ENCODE measurements at regions of chr7 and their contacts with region 1.

Region 1: GRCh38 chr7:37352974-37353948 is 95.4 kb downstream of the ELMO1 start:
- DNase-seq: peak; percentile 83
- H3K4me3 Mint-ChIP-seq: peak overlapping the region; percentile 92
- H3K27ac Mint-ChIP-seq: peak overlapping the region; percentile 99
- H3K4me1 Mint-ChIP-seq: peaks cover 86% of the 10 kb centered on the region
- H3K27me3 Mint-ChIP-seq: no peaks in the 10 kb centered on the region

Region 2: DNA sequence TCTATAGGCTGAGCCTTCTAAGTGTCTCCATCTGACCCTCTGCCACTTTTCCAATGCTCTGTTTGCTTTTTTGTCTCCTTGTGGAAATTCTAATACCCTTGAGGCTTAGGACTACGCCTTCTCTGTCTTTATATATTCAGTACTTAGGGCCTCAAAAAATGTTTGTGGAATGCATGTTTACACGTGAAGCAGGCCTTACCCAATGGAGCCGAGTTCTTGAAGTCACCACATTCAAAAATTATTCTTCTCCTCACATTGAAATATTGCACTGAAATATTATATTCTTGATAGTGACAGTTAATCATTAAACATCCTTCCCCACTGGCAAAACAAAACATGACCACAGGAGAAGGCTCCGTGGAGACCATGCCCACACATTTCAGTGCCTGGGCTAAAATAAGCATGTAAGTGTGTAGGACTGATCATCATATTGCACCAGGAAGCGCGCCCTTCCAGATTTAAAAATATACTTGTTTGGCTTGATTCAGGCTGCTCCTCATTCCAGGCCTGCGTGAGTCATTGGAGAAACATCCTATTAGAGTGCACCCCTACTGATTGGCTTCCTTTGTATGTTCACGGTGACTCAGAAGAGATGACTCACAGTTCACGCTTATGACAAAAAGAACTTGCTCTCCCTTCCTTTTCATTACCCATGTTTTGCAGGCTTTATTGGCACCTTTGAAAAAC is 321.5 kb before region 1 on chr7:
- CTCF ChIA-PET with region 1: interaction called, 3 read pairs
- POLR2A ChIA-PET with region 1: no interaction called
- intact Hi-C with region 1: loop called (anchors 5 kb)
- DNase-seq: peak; percentile 68
- H3K4me3 Mint-ChIP-seq: no peak overlapping the region
- H3K27ac Mint-ChIP-seq: peak overlapping the region; percentile 49
- H3K4me1 Mint-ChIP-seq: peaks cover 57% of the 10 kb centered on the region
- H3K27me3 Mint-ChIP-seq: no peaks in the 10 kb centered on the region

Region 3: DNA sequence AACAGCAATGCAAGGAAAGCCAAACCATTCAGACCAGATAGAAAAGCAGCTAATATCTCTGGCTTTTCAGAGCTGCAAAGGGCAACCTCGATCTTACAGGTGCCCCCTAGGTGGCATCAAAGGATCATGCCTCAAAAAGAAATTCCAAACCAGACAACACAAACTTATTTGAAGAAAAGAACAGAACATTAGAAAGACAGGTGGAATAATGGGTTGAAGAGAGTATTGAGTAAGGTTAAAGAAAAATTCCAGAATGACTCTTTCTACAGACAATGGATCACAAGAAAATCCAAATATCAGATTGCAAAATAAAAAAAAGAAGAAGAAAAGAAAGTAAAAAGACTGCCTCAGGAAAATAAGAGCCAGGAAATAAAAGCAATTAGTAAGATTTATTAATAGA is 118.3 kb before region 1 on chr7:
- CTCF ChIA-PET with region 1: interaction called, 39 read pairs
- POLR2A ChIA-PET with region 1: interaction called, 3 read pairs
- intact Hi-C with region 1: loop called (anchors 1 kb)
- DNase-seq: no peak
- H3K4me3 Mint-ChIP-seq: no peak overlapping the region
- H3K27ac Mint-ChIP-seq: no peak overlapping the region
- H3K4me1 Mint-ChIP-seq: peaks cover 19% of the 10 kb centered on the region
- H3K27me3 Mint-ChIP-seq: no peaks in the 10 kb centered on the region

Region 4: GRCh38 chr7:37336259-37336658 is 17.0 kb before region 1 on chr7:
- CTCF ChIA-PET with region 1: interaction called, 42 read pairs
- POLR2A ChIA-PET with region 1: interaction called, 36 read pairs
- intact Hi-C with region 1: loop called (anchors 1 kb)
- DNase-seq: peak; percentile 71
- H3K4me3 Mint-ChIP-seq: peak overlapping the region; percentile 17
- H3K27ac Mint-ChIP-seq: peak overlapping the region; percentile 76
- H3K4me1 Mint-ChIP-seq: peaks cover 89% of the 10 kb centered on the region
- H3K27me3 Mint-ChIP-seq: no peaks in the 10 kb centered on the region

Region 5: GRCh38 chr7:37376386-37376785 is 23.1 kb after region 1 on chr7:
- CTCF ChIA-PET with region 1: interaction called, 3 read pairs
- POLR2A ChIA-PET with region 1: no interaction called
- intact Hi-C with region 1: loop called (anchors 2 kb)
- DNase-seq: peak; percentile 80
- H3K4me3 Mint-ChIP-seq: peak overlapping the region; percentile 54
- H3K27ac Mint-ChIP-seq: peak overlapping the region; percentile 95
- H3K4me1 Mint-ChIP-seq: peaks cover 72% of the 10 kb centered on the region
- H3K27me3 Mint-ChIP-seq: no peaks in the 10 kb centered on the region

Region 6: DNA sequence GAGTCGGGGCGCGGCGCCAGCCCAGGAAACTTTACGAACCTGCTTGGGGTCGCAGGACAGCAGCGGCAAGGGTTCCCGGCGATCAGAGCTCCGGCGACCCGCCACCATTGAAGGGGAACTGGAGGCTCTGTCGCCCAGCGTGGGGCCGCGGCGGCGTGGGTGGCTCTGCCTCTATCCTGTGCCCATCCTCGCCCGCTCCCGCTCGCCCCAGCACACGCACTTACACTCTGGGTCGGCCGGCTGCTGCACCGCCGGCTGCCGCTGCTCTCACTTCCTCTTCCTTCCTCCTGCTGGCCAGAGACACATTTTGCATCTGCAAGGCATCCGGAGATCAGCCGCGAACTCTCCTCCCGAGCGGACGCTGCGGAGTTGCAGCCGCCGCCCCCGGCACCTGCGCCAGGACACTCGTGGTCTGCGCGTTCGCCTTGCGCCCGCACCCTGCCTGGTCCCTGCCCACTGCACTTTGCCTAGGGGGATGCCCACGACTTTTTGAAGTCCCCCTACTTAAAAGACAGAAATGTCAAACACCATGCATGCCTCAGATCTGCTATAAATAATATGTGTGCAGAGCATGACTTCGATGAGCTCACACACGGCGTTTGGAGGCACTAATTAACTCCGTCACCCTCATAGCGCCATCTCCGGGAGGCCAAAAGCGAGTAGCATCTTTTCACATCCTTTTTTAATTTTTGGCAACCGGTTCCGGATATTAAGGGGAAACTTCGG is 95.5 kb after region 1 on chr7 and contains the start of gene ELMO1:
- CTCF ChIA-PET with region 1: interaction called, 69 read pairs
- POLR2A ChIA-PET with region 1: interaction called, 55 read pairs
- intact Hi-C with region 1: loop called (anchors 1 kb)
- DNase-seq: peak; percentile 87
- H3K4me3 Mint-ChIP-seq: peak within 1 kb of the TSS; percentile 87
- H3K27ac Mint-ChIP-seq: peak within 1 kb of the TSS; percentile 96
- H3K4me1 Mint-ChIP-seq: peaks cover 44% of the 10 kb centered on the region
- H3K27me3 Mint-ChIP-seq: peaks cover 1% of the 10 kb centered on the region
- total RNA-seq, gene ELMO1: 88.7 to 93.3 TPM

Region 7: DNA sequence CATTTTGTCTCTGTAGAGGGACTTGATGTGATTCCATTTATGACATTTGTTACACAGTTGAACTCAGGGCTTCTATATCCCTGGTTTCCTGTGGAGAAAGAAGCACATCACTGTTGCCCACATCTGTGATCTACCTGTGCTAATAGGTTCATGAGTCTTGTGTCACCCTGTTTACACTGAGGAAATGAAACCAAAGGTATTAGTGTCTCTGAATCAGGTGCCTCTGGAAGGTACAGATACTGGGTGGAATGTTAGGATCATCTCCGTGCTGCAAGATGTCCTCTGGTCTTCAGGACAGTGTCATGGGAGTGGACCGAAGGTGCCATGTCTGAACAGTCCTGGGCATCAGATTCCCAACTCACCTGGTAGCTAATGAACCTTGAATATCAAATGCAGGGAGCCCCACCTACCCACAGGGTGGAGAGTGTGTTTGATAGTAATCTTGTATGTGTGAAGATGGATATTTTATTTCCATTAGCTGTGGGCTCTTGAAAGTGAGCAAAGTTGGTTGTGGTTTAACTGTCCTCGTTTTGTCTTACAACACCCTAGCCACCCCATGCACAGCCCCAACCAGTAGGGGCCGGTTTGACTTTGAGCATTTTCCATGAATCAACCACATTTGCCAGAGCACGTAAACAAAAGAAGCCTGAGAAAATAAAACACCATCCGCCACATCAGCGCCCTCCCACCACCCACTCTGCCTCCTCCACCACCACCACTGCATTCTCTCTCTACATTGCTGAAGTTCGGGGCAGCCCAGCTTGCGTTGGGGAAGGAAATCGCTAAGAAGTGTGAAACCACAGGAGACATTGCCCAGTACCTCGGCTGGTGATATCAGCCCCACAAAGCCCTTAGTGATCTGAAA is 879.5 kb after region 1 on chr7:
- CTCF ChIA-PET with region 1: no interaction called
- POLR2A ChIA-PET with region 1: no interaction called
- intact Hi-C with region 1: no loop called
- DNase-seq: peak; percentile 88
- H3K4me3 Mint-ChIP-seq: peak overlapping the region; percentile 44
- H3K27ac Mint-ChIP-seq: peak overlapping the region; percentile 77
- H3K4me1 Mint-ChIP-seq: peaks cover 44% of the 10 kb centered on the region
- H3K27me3 Mint-ChIP-seq: no peaks in the 10 kb centered on the region

Measured in activated CD4-positive, alpha-beta memory T cell treated with anti-CD3 and anti-CD28 coated beads for 36 hours (primary cell).